Mammary epithelial cell (primary cell): ENCODE measurements at regions of chr14 and their contacts with region 1.

Region 1: DNA sequence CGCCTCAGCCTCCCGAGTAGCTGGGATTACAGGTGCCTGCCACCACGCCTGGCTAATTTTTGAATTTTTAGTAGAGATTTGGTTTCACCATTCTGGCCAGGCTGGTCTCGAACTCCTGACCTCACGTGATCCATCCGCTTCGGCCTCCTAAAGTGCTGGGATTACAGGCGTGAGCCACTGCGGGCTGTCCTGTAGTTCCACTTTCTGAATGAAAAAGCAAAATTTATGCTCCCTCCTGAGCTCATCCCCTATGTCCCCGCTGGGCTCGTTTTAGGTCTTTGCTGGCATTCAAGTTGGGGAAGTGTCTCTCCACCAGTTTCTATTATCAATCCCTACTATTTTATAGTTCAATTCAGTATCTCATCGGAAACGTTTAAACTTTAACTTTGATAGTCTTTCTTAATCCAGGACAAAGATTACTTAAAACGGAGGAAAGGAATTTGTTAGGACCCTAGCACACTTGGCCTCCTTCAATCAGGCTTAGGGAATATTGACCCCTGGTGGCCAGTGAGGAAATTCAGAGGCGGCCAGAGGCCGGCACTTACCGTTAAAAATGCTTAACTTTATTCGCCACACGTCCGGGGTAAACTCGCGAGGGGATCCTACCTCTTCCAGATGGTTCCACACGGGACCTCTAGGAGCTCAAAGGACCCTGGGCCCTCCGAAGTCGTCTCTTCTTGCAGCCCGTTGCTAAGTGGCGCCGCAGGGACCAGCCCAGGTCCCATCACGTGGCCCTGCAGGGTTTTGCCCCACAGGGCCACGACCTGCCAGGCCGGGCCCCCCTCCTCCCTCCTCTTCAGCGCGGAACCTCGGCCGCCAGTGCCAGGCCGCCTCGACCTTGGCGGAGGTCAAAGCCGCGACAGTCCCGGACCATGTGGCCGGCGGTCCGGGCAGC is 11.4 kb upstream of the DNAL1 start:
- DNase-seq: peak; percentile 46
- H3K4me3 ChIP-seq: peak overlapping the region; percentile 47 to 57 (median 53)
- H3K27ac ChIP-seq: no peak overlapping the region
- H3K4me1 ChIP-seq: peaks cover 13% of the 10 kb centered on the region
- H3K27me3 ChIP-seq: no peaks in the 10 kb centered on the region
- CTCF ChIP-seq: peak; percentile 86 to 91

Region 2: DNA sequence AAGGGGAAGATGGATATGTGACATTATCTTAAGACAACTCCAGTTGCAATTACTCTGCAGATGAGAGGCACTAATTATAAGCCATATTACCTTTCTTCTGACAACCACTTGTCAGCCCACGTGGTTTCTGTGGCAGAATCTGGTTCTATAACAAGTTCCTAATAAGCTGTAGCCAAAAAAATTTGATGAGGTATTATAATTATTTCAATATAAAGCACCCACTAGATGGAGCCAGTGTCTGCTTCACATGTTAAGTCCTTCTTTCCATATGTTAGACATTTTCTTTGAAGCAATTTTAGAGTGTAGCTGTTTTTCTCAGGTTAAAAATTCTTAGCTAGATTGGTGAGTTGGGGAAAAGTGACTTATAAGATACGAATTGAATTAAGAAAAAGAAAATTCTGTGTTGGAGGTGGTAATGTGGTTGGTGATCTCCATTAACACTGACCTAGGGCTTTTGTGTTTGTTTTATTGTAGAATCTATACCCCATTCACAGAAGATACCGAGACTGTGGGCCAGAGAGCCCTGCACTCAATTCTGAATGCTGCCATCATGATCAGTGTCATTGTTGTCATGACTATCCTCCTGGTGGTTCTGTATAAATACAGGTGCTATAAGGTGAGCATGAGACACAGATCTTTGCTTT is 460.1 kb before region 1 on chr14:
- CTCF ChIA-PET with region 1: no interaction called
- dilution Hi-C with region 1: no loop called
- in situ Hi-C with region 1: no loop called
- intact Hi-C with region 1: loop called (anchors 5 kb)
- DNase-seq: peak; percentile 9
- H3K4me3 ChIP-seq: no peak overlapping the region
- H3K27ac ChIP-seq: no peak overlapping the region
- H3K4me1 ChIP-seq: no peaks in the 10 kb centered on the region
- H3K27me3 ChIP-seq: no peaks in the 10 kb centered on the region
- CTCF ChIP-seq: peak; percentile 38 to 52

Region 3: GRCh38 chr14:73428353-73428824 is 205.0 kb before region 1 on chr14:
- CTCF ChIA-PET with region 1: no interaction called
- dilution Hi-C with region 1: no loop called
- in situ Hi-C with region 1: no loop called
- intact Hi-C with region 1: no loop called
- DNase-seq: no peak
- H3K4me3 ChIP-seq: no peak overlapping the region
- H3K27ac ChIP-seq: no peak overlapping the region
- H3K4me1 ChIP-seq: no peaks in the 10 kb centered on the region
- H3K27me3 ChIP-seq: no peaks in the 10 kb centered on the region
- CTCF ChIP-seq: no peak

Region 4: GRCh38 chr14:73472185-73473114 is 160.9 kb before region 1 on chr14:
- CTCF ChIA-PET with region 1: no interaction called
- dilution Hi-C with region 1: no loop called
- in situ Hi-C with region 1: no loop called
- intact Hi-C with region 1: loop called (anchors 1 kb)
- DNase-seq: peak; percentile 54
- H3K4me3 ChIP-seq: no peak overlapping the region
- H3K27ac ChIP-seq: no peak overlapping the region
- H3K4me1 ChIP-seq: peaks cover 3% of the 10 kb centered on the region
- H3K27me3 ChIP-seq: no peaks in the 10 kb centered on the region
- CTCF ChIP-seq: peak; percentile 64 to 67

Region 5: GRCh38 chr14:73503648-73504047 is 129.7 kb before region 1 on chr14:
- CTCF ChIA-PET with region 1: no interaction called
- dilution Hi-C with region 1: no loop called
- in situ Hi-C with region 1: loop called (anchors 5 kb)
- intact Hi-C with region 1: loop called (anchors 1 kb)
- DNase-seq: no peak
- H3K4me3 ChIP-seq: no peak overlapping the region
- H3K27ac ChIP-seq: no peak overlapping the region
- H3K4me1 ChIP-seq: no peaks in the 10 kb centered on the region
- H3K27me3 ChIP-seq: no peaks in the 10 kb centered on the region
- CTCF ChIP-seq: no peak

Region 6: DNA sequence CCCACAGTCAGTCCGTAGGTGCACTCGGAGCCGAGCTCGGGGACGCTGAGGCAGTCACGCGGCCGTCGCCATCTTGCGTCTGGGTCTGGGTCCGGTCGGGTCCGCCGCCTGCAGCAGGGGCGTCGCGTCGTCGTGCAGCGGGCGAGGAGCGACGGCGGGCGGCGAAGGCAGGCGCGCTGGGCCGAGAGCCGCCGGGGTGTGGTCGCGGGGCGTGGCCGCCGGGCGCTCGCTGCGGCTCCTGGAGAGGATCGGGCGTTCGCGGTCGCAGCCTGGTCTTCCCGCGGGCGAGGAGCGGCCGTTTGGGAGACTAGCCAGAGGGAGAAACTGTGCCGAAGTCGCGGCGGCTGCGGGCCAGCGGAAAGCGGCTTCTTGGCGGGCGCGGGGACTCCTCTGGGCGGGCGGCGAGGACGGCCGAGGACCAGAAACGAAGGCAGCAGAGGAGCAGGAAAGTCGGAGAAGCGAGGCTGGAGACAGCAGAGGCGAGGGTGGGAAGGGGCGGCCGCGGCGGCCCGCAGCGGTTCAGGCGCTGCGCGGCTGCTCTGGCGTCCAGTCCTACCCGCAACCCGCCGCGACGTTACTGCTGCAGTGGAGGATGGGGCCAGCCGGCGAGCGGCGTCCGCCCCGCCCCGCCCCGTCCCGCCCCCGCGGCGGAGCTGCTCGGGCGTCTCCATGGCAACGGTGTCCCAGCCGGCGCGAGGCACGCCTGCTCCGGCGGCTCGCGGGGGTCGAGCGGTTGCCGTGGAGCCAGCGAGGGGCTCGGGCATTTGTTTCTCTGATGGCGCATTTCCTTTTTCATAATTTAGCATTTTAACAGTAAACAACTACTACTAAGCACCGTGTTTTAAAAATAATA is 80.7 kb after region 1 on chr14 and contains the start of gene PNMA1:
- CTCF ChIA-PET with region 1: no interaction called
- dilution Hi-C with region 1: no loop called
- in situ Hi-C with region 1: no loop called
- intact Hi-C with region 1: loop called (anchors 5 kb)
- DNase-seq: peak; percentile 71
- H3K4me3 ChIP-seq: peak within 1 kb of the TSS; percentile 62 to 79 (median 68)
- H3K27ac ChIP-seq: peak within 1 kb of the TSS; percentile 54
- H3K4me1 ChIP-seq: peaks cover 14% of the 10 kb centered on the region
- H3K27me3 ChIP-seq: no peaks in the 10 kb centered on the region
- CTCF ChIP-seq: no peak
- total RNA-seq, gene PNMA1: 15.7 to 30.5 TPM

Region 7: GRCh38 chr14:73825551-73826188 is 192.3 kb after region 1 on chr14:
- CTCF ChIA-PET with region 1: no interaction called
- dilution Hi-C with region 1: no loop called
- in situ Hi-C with region 1: no loop called
- intact Hi-C with region 1: no loop called
- DNase-seq: peak; percentile 64
- H3K4me3 ChIP-seq: no peak overlapping the region
- H3K27ac ChIP-seq: no peak overlapping the region
- H3K4me1 ChIP-seq: peaks cover 15% of the 10 kb centered on the region
- H3K27me3 ChIP-seq: no peaks in the 10 kb centered on the region
- CTCF ChIP-seq: peak; percentile 80 to 95